Naive thymus-derived CD8-positive, alpha-beta T cell (primary cell): ENCODE measurements at regions of chr10 and their contacts with region 1.

Region 1: GRCh38 chr10:97780841-97781617 is 9.2 kb upstream of the SFRP5 start:
- DNase-seq: peak in 1 of 10 donors; percentile 48
- ATAC-seq: peak in 1 of 2 donors; percentile 6
- H3K4me3 Mint-ChIP-seq: peak overlapping the region; percentile 6 to 86 (median 71)
- H3K27ac Mint-ChIP-seq: peak overlapping the region; percentile 86 to 99 (median 96)
- H3K4me1 Mint-ChIP-seq: peaks cover 33 to 60% (median 45%) of the 10 kb centered on the region in 4 donors
- H3K27me3 Mint-ChIP-seq: no peaks in the 10 kb centered on the region

Region 2: GRCh38 chr10:97726636-97727178 is 54.3 kb before region 1 on chr10:
- POLR2A ChIA-PET with region 1: no interaction called
- DNase-seq: no peak
- ATAC-seq: no peak
- H3K4me3 Mint-ChIP-seq: no peak overlapping the region
- H3K27ac Mint-ChIP-seq: no peak overlapping the region
- H3K4me1 Mint-ChIP-seq: no peaks in the 10 kb centered on the region
- H3K27me3 Mint-ChIP-seq: peaks cover 3 to 15% (median 7%) of the 10 kb centered on the region in 5 donors

Region 3: GRCh38 chr10:97736902-97737769 is 43.9 kb before region 1 on chr10 and contains the start of gene ZFYVE27:
- POLR2A ChIA-PET with region 1: interaction called, 17 read pairs
- DNase-seq: peak; percentile 89 to 96 (median 94)
- ATAC-seq: peak; percentile 85 to 88
- H3K4me3 Mint-ChIP-seq: peak within 1 kb of the TSS; percentile 93 to 99 (median 96)
- H3K27ac Mint-ChIP-seq: peak within 1 kb of the TSS; percentile 92 to 99 (median 98)
- H3K4me1 Mint-ChIP-seq: peaks cover 31 to 56% (median 52%) of the 10 kb centered on the region in 4 donors
- H3K27me3 Mint-ChIP-seq: no peaks in the 10 kb centered on the region
- polyA plus RNA-seq, gene ZFYVE27: 29.1 to 37.9 (median 34.1) TPM

Region 4: GRCh38 chr10:97759158-97759887 is 21.7 kb before region 1 on chr10:
- POLR2A ChIA-PET with region 1: interaction called, 34 read pairs
- DNase-seq: peak; percentile 10 to 75 (median 51)
- ATAC-seq: peak; percentile 65 to 86
- H3K4me3 Mint-ChIP-seq: no peak overlapping the region
- H3K27ac Mint-ChIP-seq: peak overlapping the region in 4 of 10 donors; percentile 13 to 78 (median 56)
- H3K4me1 Mint-ChIP-seq: peaks cover 1 to 15% (median 7%) of the 10 kb centered on the region in 4 donors
- H3K27me3 Mint-ChIP-seq: no peaks in the 10 kb centered on the region

Region 5: GRCh38 chr10:97792141-97792721 is 11.2 kb after region 1 on chr10:
- POLR2A ChIA-PET with region 1: interaction called, 19 read pairs
- DNase-seq: peak; percentile 44 to 83 (median 68)
- ATAC-seq: peak; percentile 56 to 80
- H3K4me3 Mint-ChIP-seq: peak overlapping the region in 3 of 10 donors; percentile 10 to 42 (median 22)
- H3K27ac Mint-ChIP-seq: peak overlapping the region in 7 of 10 donors; percentile 15 to 76 (median 65)
- H3K4me1 Mint-ChIP-seq: peaks cover 26 to 63% (median 40%) of the 10 kb centered on the region in 4 donors
- H3K27me3 Mint-ChIP-seq: peaks cover 0 to 2% (median 0%) of the 10 kb centered on the region in 5 donors

Region 6: DNA sequence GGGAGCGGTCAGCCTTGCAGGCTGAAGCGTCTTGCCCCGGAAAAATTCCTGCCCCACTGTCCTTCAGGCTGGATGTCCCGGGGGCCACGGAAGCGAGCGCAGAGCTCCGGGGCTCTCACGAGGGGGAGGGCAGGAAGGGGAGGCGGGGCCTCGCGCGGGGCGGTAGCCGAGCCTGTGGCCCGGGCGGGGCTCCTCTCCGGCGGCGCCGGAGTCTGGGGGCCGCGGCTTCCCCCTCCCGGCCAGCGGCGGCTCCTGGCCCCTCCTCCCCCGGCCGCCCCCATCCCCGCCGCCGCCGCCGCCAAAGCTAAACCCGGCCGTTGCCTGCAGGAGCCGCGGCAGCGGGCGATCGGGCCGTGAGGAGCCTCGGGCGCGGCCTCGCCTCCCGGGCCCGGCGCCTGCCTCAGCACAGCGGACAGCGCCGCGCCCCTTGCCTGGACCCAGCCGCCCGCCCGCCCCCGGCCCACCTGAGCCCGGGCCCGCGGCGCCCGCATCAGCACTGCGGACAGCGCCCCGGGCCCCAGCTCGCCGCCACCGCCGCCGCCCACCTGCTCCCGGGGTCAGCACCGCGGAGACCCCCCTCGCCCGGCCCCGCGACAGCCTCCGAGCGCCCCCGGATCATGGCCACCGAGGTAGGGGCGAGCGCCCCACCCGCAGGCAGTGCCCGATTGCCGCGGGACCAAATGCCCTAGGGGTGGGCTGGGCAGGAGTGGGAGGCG is 68.8 kb after region 1 on chr10 and contains the start of gene GOLGA7B:
- POLR2A ChIA-PET with region 1: interaction called, 30 read pairs
- DNase-seq: peak; percentile 42 to 78 (median 66)
- ATAC-seq: peak; percentile 77 to 81
- H3K4me3 Mint-ChIP-seq: peak within 1 kb of the TSS; percentile 80 to 95 (median 92)
- H3K27ac Mint-ChIP-seq: peak within 1 kb of the TSS; percentile 71 to 94 (median 84)
- H3K4me1 Mint-ChIP-seq: peaks cover 31 to 41% (median 39%) of the 10 kb centered on the region in 4 donors
- H3K27me3 Mint-ChIP-seq: peaks cover 0 to 3% (median 0%) of the 10 kb centered on the region in 5 donors
- polyA plus RNA-seq, gene GOLGA7B: 0.35 to 0.61 (median 0.44) TPM

Region 7: GRCh38 chr10:97869091-97870042 is 88.3 kb after region 1 on chr10:
- POLR2A ChIA-PET with region 1: interaction called, 26 read pairs
- DNase-seq: peak; percentile 51 to 91 (median 81)
- ATAC-seq: peak; percentile 99
- H3K4me3 Mint-ChIP-seq: peak overlapping the region in 8 of 10 donors; percentile 2 to 61 (median 36)
- H3K27ac Mint-ChIP-seq: peak overlapping the region; percentile 36 to 86 (median 63)
- H3K4me1 Mint-ChIP-seq: peaks cover 6 to 21% (median 14%) of the 10 kb centered on the region in 4 donors
- H3K27me3 Mint-ChIP-seq: peaks cover 0 to 3% (median 0%) of the 10 kb centered on the region in 5 donors

Region 8: DNA sequence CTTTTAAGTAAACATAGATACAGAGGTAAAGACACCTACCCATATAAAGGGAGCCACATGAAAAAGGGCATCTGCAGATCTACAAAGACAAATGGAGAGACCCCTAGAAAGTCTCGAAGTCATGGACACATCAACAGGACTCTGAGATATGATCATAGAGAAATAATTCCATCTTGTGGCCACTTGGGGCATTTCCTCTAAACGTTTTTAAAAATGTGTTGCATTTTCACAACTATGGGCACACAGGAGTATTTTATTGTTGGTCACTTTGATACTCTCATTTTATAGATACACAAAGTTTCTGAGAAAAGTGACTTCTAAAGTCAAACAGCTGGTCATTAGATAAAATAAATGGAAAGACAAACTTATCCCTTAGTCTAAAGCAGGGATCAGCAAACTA is 162.3 kb after region 1 on chr10:
- POLR2A ChIA-PET with region 1: no interaction called
- DNase-seq: no peak
- ATAC-seq: no peak
- H3K4me3 Mint-ChIP-seq: no peak overlapping the region
- H3K27ac Mint-ChIP-seq: no peak overlapping the region
- H3K4me1 Mint-ChIP-seq: peaks cover 0 to 5% (median 1%) of the 10 kb centered on the region in 4 donors
- H3K27me3 Mint-ChIP-seq: peaks cover 22 to 51% (median 45%) of the 10 kb centered on the region in 5 donors